Left cardiac atrium (tissue), 4 donors: ENCODE measurements at regions of chr10 and their contacts with region 1.

Region 1: DNA sequence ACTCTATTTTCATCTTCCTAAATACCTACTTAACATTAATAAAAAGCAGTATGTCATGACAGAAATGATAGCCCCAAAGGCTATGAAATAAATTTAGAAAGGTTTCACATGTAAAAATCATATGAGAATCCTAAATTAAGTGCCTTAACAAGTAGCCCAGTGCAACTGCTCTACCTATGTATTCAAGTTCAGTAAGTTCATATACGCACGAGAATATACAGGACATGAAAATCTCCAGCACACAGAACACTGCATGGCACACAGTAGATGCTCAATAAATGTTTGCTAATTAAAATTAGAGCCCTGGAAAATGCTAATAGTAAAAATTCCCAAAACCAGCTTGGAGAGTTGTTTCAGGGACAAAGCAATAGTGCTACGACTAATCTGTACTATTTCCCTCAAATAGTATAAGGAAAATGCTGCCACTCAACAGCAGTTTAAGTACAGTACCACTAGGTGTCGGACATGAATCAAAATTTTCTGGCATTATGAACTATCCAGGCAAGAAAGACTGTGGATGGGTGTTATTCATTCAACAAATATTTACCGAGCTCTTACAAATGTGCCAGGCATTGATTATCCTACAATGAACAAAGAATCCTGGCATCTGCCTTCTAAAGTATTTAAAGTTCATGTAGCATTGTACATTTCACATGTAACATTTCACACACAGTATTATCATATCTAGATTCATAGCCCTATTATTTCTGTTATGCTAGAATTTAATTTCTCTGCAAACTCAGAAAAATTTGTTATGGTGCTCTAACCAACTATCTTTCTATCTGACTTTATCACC is 80.9 kb downstream of the ARHGAP21 start:
- DNase-seq: no peak
- ATAC-seq: peak; percentile 86 to 95

Region 2: GRCh38 chr10:24974976-24975375 is 332.2 kb after region 1 on chr10:
- intact Hi-C with region 1: loop called (anchors 5 to 10 kb)
- DNase-seq: peak; percentile 54
- ATAC-seq: peak; percentile 92 to 93

Region 3: GRCh38 chr10:24989867-24990266 is 347.0 kb after region 1 on chr10:
- intact Hi-C with region 1: loop called in 1 of 2 experiments (anchors 10 kb)
- DNase-seq: no peak
- ATAC-seq: no peak